ENCODE measurements at regions of chr11 and their contacts with region 1.

Region 1: GRCh38 chr11:77309401-77310085 is 8.1 kb upstream of the GDPD4 start:
- DNase-seq: no peak
- ATAC-seq: no peak
- H3K4me3 ChIP-seq: no peak overlapping the region
- H3K27ac ChIP-seq: no peak overlapping the region
- H3K4me1 ChIP-seq: no peaks in the 10 kb centered on the region
- H3K27me3 ChIP-seq: no peaks in the 10 kb centered on the region
- CTCF ChIP-seq: no peak
- POLR2A ChIP-seq: no peak

Region 2: DNA sequence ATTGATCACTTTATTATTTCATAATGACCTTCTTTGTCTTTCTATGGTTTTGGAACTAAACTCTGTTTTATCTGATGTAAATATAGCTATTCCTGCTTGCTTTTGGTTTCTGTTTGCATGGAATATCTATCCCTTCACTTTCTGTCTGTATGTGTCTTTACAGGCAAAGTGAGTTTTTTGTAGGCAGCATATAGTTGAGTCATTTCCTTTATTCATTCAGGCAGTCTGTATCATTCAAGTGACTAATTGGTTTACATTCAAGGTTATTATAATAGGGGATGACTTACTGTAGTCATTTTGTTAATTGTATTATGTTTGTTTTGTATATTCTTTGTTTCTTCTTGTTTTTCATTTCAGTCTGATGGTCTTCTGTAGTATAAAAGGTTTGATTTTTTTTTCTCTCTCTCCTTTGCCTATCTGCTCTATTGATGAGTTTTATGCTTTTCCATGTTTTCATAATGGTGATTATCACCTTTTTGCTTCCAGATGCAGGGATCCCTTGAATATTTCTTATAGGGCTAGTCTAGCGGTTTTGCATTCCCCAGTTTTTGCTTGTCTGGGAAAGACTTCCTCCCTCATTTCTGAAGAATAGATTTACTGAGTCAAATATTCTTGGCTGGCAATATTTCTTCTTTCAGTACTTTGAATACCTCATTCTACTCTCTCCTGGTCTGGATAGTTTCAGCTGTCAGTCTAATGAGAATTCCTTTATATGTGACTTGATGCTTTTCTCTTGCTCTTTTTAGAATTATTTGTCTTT is 58.5 kb before region 1 on chr11:
- in situ Hi-C with region 1: loop called in 1 of 4 experiments (anchors 10 kb)
- intact Hi-C with region 1: no loop called
- DNase-seq: no peak
- ATAC-seq: no peak
- H3K4me3 ChIP-seq: no peak overlapping the region
- H3K27ac ChIP-seq: no peak overlapping the region
- H3K4me1 ChIP-seq: no peaks in the 10 kb centered on the region
- H3K27me3 ChIP-seq: no peaks in the 10 kb centered on the region
- CTCF ChIP-seq: no peak
- POLR2A ChIP-seq: no peak

Measured in gastrocnemius medialis (tissue), 4 donors.